ENCODE measurements at regions of chr2 and their contacts with region 1.

Region 1: GRCh38 chr2:178112202-178113152 is at the start of gene RBM45:
- DNase-seq: peak; percentile 86
- H3K4me3 Mint-ChIP-seq: peak within 1 kb of the TSS; percentile 92
- H3K27ac Mint-ChIP-seq: peak within 1 kb of the TSS; percentile 59
- H3K4me1 Mint-ChIP-seq: peaks cover 36% of the 10 kb centered on the region
- H3K27me3 Mint-ChIP-seq: no peaks in the 10 kb centered on the region
- total RNA-seq, gene RBM45: 5.7 to 5.8 TPM

Region 2: DNA sequence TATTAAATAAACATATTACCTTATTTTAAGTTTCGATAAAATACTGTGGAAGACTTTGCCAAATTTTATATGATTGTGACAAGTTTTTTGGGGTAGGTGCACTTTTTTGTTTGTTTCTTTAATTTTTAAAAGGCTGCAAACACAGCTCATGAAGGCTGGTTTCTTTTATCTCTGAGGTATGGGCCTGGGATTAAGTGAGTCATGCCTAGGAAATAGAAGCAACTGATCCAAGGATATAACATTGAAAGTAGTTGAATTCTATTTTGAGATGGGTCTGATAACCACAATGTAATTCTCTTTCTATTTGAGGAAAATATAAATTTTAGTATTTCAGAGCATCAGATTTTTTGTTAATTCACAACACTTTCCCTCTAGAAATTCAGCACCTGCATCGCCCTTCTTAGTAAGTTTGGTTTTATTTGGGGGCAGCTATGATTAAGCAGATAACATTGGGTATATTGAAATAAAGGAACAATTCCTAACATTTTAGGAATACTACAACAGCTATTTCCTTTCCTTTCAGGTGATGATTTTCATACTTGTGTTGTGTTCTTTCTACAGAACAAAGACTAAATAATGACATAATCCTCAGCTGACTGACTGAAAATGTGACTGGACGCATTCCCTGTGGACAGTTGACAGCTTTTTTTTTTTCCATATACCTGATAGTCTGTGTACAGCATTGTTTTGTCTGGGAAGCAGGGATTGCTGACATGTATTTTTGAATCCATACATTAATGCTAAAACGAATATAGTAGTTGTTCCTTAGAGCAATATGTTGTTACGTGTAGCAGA is 16.6 kb after region 1 on chr2:
- CTCF ChIA-PET with region 1: interaction called, 14 read pairs
- intact Hi-C with region 1: no loop called
- DNase-seq: no peak
- H3K4me3 Mint-ChIP-seq: no peak overlapping the region
- H3K27ac Mint-ChIP-seq: no peak overlapping the region
- H3K4me1 Mint-ChIP-seq: no peaks in the 10 kb centered on the region
- H3K27me3 Mint-ChIP-seq: no peaks in the 10 kb centered on the region

Region 3: GRCh38 chr2:178397002-178397605 is 284.6 kb after region 1 on chr2:
- CTCF ChIA-PET with region 1: interaction called, 7 read pairs
- intact Hi-C with region 1: loop called (anchors 5 kb)
- DNase-seq: no peak
- H3K4me3 Mint-ChIP-seq: no peak overlapping the region
- H3K27ac Mint-ChIP-seq: no peak overlapping the region
- H3K4me1 Mint-ChIP-seq: no peaks in the 10 kb centered on the region
- H3K27me3 Mint-ChIP-seq: no peaks in the 10 kb centered on the region

Region 4: GRCh38 chr2:178478439-178479274 is 366.2 kb after region 1 on chr2 and contains the start of gene FKBP7:
- CTCF ChIA-PET with region 1: interaction called, 3 read pairs
- intact Hi-C with region 1: loop called (anchors 1 kb)
- DNase-seq: peak; percentile 81
- H3K4me3 Mint-ChIP-seq: peak within 1 kb of the TSS; percentile 96
- H3K27ac Mint-ChIP-seq: peak within 1 kb of the TSS; percentile 95
- H3K4me1 Mint-ChIP-seq: peaks cover 41% of the 10 kb centered on the region
- H3K27me3 Mint-ChIP-seq: no peaks in the 10 kb centered on the region
- total RNA-seq, gene FKBP7: 2.2 to 3.1 TPM

Region 5: GRCh38 chr2:178650554-178650953 is 538.1 kb after region 1 on chr2:
- CTCF ChIA-PET with region 1: no interaction called
- intact Hi-C with region 1: no loop called
- DNase-seq: no peak
- H3K4me3 Mint-ChIP-seq: no peak overlapping the region
- H3K27ac Mint-ChIP-seq: no peak overlapping the region
- H3K4me1 Mint-ChIP-seq: no peaks in the 10 kb centered on the region
- H3K27me3 Mint-ChIP-seq: no peaks in the 10 kb centered on the region

Region 6: DNA sequence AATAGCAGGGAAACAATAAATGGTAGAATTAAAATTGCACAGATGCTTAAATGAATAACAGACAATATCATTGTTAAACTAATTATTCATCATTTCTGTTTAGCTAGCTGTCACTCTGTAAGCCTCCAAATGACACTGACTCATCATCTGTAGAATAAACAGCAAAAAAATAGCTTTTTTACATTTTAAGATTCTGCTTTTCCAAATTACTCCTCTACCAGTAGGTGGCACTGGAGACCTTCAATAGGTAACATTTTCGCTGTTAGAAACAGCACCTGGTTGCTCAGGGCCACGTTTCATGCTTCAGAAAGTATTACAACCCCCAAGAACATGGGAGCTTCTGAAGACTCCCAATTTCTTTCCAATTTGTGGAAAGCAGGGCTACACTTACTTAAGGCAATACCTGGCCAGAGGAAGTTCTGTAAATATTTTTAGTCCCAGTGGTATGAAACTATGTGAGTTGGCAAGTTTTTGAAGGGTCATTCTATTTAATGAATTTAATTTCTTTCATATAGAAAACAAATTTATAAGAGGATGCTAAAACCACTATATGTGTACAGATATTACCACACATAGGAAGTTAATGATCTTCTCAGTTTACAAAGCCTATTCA is 649.4 kb after region 1 on chr2:
- CTCF ChIA-PET with region 1: no interaction called
- intact Hi-C with region 1: loop called (anchors 2 kb)
- DNase-seq: peak; percentile 51
- H3K4me3 Mint-ChIP-seq: no peak overlapping the region
- H3K27ac Mint-ChIP-seq: no peak overlapping the region
- H3K4me1 Mint-ChIP-seq: no peaks in the 10 kb centered on the region
- H3K27me3 Mint-ChIP-seq: no peaks in the 10 kb centered on the region

Region 7: DNA sequence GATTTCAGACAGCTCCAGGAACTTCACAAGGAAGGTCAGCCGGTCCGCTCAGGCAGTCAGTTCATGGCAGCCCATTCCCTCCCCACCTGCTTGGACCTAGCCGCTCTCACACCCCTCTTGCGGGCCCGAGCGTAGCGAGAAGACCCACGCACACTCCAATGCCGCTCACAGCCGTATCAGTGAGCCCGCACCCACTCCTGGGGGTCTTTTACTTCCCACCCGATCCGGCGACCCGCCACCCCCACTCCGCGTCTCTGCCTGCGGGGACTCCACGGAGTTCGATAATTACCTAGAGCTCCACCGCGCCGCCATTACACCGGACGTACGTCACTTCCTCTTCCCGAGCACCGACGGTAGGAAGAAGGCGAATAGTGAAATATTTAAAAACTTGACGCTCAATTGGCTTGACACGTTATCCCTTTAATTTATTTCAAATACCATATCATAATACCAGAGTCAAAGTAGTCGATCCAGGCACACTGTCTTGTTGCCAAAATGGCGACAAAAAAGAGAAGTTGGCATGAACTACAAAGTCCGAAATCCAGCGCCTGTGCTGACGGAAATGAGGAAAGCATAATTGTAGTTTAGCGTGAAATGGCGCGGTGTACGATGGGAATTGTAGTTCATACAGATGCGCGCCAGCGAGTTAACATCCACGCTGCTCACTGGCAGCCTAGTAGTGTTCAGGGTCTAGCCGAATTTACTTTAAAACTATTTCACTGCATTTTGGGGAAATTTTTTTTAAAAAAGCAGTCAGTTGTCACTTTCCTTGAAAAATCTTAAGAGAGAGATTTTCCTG is 1894.5 kb after region 1 on chr2 and contains the start of gene CWC22:
- CTCF ChIA-PET with region 1: no interaction called
- intact Hi-C with region 1: loop called (anchors 2 kb)
- DNase-seq: peak; percentile 93
- H3K4me3 Mint-ChIP-seq: peak within 1 kb of the TSS; percentile 92
- H3K27ac Mint-ChIP-seq: peak within 1 kb of the TSS; percentile 100
- H3K4me1 Mint-ChIP-seq: peaks cover 36% of the 10 kb centered on the region
- H3K27me3 Mint-ChIP-seq: no peaks in the 10 kb centered on the region
- total RNA-seq, gene CWC22: 20.4 TPM